ENCODE measurements at regions of chr12 and their contacts with region 1.

Region 1: DNA sequence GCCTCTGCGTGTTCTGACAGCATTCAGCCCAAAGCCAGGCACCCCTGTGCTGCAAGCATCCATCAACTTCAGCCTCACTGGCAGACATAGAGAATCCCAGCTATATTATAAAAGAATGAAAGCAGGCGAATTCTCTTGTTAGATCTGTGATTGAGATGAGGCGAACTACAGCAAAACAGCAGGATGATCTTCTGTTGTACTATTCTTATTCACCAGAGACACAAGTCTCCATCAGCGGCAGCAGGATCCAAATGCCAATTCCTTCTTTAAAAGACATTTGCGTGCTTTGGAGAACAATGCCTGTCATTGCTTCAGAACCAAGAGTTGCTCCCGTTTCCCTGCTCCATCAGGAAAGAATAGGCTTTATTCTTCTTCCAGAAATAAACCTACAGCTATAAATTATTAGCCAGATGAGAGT is 188.9 kb downstream of the SLC41A2 start:
- DNase-seq: no peak
- CTCF ChIP-seq: no peak

Region 2: GRCh38 chr12:104784592-104784991 is 15.4 kb after region 1 on chr12:
- CTCF ChIA-PET with region 1: interaction called, 11 read pairs
- POLR2A ChIA-PET with region 1: no interaction called
- DNase-seq: no peak
- CTCF ChIP-seq: no peak

Measured in GM10248 (cell line).